ENCODE measurements at regions of chrX and their contacts with region 1.

Region 1: GRCh38 chrX:101407748-101408531 is at the starts of genes GLA and HNRNPH2:
- DNase-seq: peak; percentile 67 to 97 (median 80)
- ATAC-seq: peak; percentile 91
- H3K4me3 ChIP-seq: peak within 1 kb of the TSS; percentile 85
- H3K4me3 Mint-ChIP-seq: peak within 1 kb of the TSS; percentile 97
- H3K27ac ChIP-seq: peak within 1 kb of the TSS; percentile 92 to 99
- H3K27ac Mint-ChIP-seq: peak within 1 kb of the TSS; percentile 97
- H3K4me1 ChIP-seq: peaks cover 29% of the 10 kb centered on the region
- H3K4me1 Mint-ChIP-seq: peaks cover 41% of the 10 kb centered on the region
- H3K27me3 ChIP-seq: no peaks in the 10 kb centered on the region
- H3K27me3 Mint-ChIP-seq: no peaks in the 10 kb centered on the region
- CTCF ChIP-seq: no peak
- total RNA-seq, gene GLA: 26.6 to 26.8 TPM
- total RNA-seq, gene HNRNPH2: 50.9 to 51.4 TPM

Region 2: DNA sequence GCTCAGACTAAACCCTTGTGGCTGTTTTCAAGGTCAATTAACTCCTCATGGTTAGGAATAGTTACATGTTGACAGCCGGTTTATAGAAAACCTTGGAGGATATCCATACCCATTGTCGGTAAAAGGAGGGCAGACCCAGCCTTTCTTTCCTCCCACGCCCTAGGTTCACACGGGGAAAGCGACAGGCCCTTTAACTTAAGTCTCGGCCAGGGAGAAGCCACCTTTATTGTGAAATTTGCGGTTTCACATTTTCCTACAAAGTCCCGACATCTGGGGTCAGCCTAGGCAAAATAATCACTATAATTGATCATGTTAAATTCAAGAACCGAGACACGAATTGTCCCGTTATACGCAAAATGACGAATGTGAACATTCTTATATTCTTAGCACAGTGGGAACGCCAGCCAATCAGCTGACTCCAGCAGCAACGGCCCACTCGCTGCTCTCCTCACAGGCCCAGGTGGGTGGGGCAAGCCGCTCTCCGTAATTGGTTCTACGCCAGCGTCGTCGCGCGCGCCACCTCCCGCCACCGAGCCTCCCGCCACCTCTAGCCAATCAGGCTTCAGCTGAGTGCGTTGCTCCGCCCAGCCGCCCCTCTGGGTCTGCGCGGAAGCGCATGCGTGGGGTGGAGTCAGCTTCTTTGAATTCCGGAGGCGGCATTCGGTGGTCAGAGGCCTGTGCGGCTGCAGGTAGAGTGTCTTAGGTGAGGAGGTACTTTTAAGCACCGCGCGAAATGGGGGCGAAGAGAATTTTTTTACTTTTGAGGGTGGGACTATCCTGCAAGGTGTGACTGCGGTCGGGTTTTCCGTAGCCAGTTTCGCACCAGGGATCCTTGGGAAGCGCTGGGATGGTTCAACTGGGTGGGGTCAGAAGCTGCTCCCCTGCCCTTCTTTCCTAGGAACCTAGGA is 310.1 kb before region 1 on chrX and contains the start of gene CENPI:
- CTCF ChIA-PET with region 1: no interaction called
- POLR2A ChIA-PET with region 1: no interaction called
- intact Hi-C with region 1: loop called in 1 of 2 experiments (anchors 5 kb)
- DNase-seq: peak; percentile 86 to 96 (median 91)
- ATAC-seq: peak; percentile 99
- H3K4me3 ChIP-seq: peak within 1 kb of the TSS; percentile 67
- H3K4me3 Mint-ChIP-seq: peak within 1 kb of the TSS; percentile 92
- H3K27ac ChIP-seq: peak within 1 kb of the TSS; percentile 66 to 87
- H3K27ac Mint-ChIP-seq: peak within 1 kb of the TSS; percentile 95
- H3K4me1 ChIP-seq: peaks cover 7% of the 10 kb centered on the region
- H3K4me1 Mint-ChIP-seq: peaks cover 22% of the 10 kb centered on the region
- H3K27me3 ChIP-seq: no peaks in the 10 kb centered on the region
- H3K27me3 Mint-ChIP-seq: no peaks in the 10 kb centered on the region
- CTCF ChIP-seq: no peak
- total RNA-seq, gene CENPI: 0.28 to 0.49 TPM

Region 3: DNA sequence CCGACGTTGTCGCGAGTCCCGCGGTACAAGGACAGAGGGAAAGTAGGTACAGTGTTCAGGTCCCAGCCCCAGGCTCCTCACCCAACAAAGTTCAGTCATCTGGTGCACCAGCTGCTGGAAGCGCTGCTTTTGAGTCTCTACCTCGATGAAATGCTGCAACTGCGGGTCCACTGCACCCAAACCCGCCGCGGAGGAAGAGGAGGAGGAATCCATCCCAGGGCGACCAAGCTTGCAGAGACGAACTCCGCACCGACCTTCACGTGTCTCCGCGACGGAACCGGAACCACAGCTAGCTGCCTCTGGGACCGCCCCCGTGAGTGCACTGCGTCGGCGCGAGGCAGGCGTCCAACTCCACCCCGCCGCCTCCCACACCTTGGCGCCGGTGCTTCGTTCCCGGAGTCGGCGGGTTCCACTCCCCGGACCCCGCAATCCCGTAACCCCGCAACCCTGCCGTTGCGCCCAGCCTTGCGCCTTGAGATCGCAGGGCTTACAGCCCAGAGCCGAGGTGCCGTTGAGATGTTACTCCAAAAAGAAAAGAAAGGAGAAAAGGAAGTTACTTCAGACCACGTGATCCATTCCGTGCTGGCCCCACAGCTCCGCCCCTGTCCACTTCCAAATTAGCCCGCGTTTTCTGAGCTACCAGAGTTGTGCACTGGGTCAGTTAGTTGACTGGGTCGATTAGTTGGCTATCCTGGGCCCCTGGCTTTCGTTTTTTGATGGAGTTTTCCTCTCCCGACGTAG is 59.3 kb before region 1 on chrX and contains the start of gene TIMM8A:
- CTCF ChIA-PET with region 1: no interaction called
- POLR2A ChIA-PET with region 1: no interaction called
- intact Hi-C with region 1: loop called in 1 of 2 experiments (anchors 5 kb)
- DNase-seq: peak; percentile 48 to 87 (median 68)
- ATAC-seq: peak; percentile 99
- H3K4me3 ChIP-seq: peak within 1 kb of the TSS; percentile 86
- H3K4me3 Mint-ChIP-seq: peak within 1 kb of the TSS; percentile 92
- H3K27ac ChIP-seq: peak within 1 kb of the TSS; percentile 67 to 88
- H3K27ac Mint-ChIP-seq: peak within 1 kb of the TSS; percentile 88
- H3K4me1 ChIP-seq: peaks cover 15% of the 10 kb centered on the region
- H3K4me1 Mint-ChIP-seq: peaks cover 19% of the 10 kb centered on the region
- H3K27me3 ChIP-seq: no peaks in the 10 kb centered on the region
- H3K27me3 Mint-ChIP-seq: no peaks in the 10 kb centered on the region
- CTCF ChIP-seq: no peak
- total RNA-seq, gene TIMM8A: 5.0 to 6.4 TPM